ENCODE measurements at regions of chr16 and their contacts with region 1.

Region 1: DNA sequence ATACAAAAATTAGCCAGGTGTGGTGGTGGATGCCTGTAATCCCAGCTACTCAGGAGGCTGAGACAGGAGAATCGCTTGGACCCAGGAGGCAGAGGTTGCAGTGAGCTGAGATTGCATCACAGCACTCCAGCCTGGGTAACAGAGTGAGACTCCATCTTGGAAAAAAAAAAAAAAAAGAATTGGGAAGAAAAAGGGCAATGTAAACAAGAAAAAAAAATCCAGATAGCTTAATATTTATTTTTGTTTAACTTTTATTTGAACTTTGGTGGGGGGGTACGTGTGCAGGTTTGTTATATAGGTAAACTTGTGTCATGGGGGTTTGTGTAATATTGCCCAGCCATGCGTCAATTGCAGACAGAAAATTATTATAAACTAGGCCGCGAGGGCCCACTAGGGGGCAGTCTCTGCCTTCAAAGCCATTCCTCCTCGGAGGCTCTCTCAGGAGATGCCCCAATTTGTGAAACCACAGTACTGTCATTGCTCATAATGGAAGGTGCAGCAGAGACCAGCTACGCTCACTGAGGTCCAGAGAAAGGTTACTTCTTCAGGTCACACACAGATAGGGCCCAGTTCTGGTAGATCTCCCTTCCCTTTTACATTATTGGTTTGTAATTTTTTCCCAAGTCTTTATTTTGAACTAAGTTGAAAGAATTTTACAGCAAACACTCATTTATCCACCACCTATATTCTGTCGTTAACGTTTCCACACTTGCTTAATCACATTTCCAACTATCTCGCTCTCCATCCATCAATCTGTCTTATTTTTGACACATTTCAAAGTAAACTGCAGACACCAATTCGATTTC is 206.2 kb downstream of the PRKCB start:
- DNase-seq: peak; percentile 11
- H3K4me3 ChIP-seq: no peak overlapping the region
- H3K27ac ChIP-seq: no peak overlapping the region
- H3K27me3 ChIP-seq: no peaks in the 10 kb centered on the region
- CTCF ChIP-seq: peak; percentile 78

Region 2: GRCh38 chr16:24027466-24027865 is 14.6 kb before region 1 on chr16:
- CTCF ChIA-PET with region 1: interaction called, 11 read pairs
- POLR2A ChIA-PET with region 1: no interaction called
- DNase-seq: no peak
- H3K4me3 ChIP-seq: no peak overlapping the region
- H3K27ac ChIP-seq: no peak overlapping the region
- H3K27me3 ChIP-seq: no peaks in the 10 kb centered on the region
- CTCF ChIP-seq: no peak

Region 3: DNA sequence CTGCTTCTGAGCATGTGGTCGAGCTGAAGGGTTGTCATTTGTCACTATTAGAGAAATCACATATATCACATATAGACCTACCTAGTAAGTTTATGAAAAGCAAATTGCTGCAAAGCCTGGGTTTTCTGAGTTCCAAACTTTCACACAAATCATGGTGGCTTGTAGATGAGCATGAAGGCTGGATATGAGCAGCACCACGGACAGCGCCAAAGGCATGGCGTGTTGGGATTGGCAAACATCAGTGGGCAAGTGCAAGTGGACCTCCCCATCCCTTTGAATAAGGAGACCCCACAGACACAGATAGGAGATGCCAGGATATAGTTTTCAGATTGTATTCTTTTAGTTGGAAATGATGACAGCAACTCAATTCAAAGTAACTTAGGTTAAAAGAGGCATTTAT is 136.5 kb after region 1 on chr16:
- CTCF ChIA-PET with region 1: no interaction called
- POLR2A ChIA-PET with region 1: no interaction called
- DNase-seq: no peak
- H3K4me3 ChIP-seq: no peak overlapping the region
- H3K27ac ChIP-seq: no peak overlapping the region
- H3K27me3 ChIP-seq: no peaks in the 10 kb centered on the region
- CTCF ChIP-seq: no peak

Measured in AG04450 (cell line).